ENCODE measurements at regions of chr11 and their contacts with region 1.

Region 1: GRCh38 chr11:130070846-130071200 is 1.1 kb downstream of the APLP2 start:
- DNase-seq: no peak
- H3K4me3 ChIP-seq: peak overlapping the region; percentile 91
- H3K27ac ChIP-seq: peak overlapping the region; percentile 69
- H3K4me1 ChIP-seq: peaks cover 15% of the 10 kb centered on the region
- H3K27me3 ChIP-seq: no peaks in the 10 kb centered on the region
- CTCF ChIP-seq: no peak

Region 2: GRCh38 chr11:129846501-129847335 is 224.1 kb before region 1 on chr11:
- CTCF ChIA-PET with region 1: no interaction called
- POLR2A ChIA-PET with region 1: no interaction called
- intact Hi-C with region 1: no loop called
- DNase-seq: no peak
- H3K4me3 ChIP-seq: no peak overlapping the region
- H3K27ac ChIP-seq: no peak overlapping the region
- H3K4me1 ChIP-seq: no peaks in the 10 kb centered on the region
- H3K27me3 ChIP-seq: no peaks in the 10 kb centered on the region
- CTCF ChIP-seq: no peak

Region 3: GRCh38 chr11:129996113-129996870 is 74.5 kb before region 1 on chr11:
- CTCF ChIA-PET with region 1: interaction called, 10 read pairs
- POLR2A ChIA-PET with region 1: no interaction called
- intact Hi-C with region 1: no loop called
- DNase-seq: peak; percentile 22
- H3K4me3 ChIP-seq: no peak overlapping the region
- H3K27ac ChIP-seq: peak overlapping the region; percentile 15
- H3K4me1 ChIP-seq: peaks cover 10% of the 10 kb centered on the region
- H3K27me3 ChIP-seq: no peaks in the 10 kb centered on the region
- CTCF ChIP-seq: no peak

Region 4: GRCh38 chr11:130118636-130119387 is 48.0 kb after region 1 on chr11:
- CTCF ChIA-PET with region 1: no interaction called
- POLR2A ChIA-PET with region 1: interaction called, 10 read pairs
- intact Hi-C with region 1: no loop called
- DNase-seq: no peak
- H3K4me3 ChIP-seq: no peak overlapping the region
- H3K27ac ChIP-seq: no peak overlapping the region
- H3K4me1 ChIP-seq: peaks cover 6% of the 10 kb centered on the region
- H3K27me3 ChIP-seq: no peaks in the 10 kb centered on the region
- CTCF ChIP-seq: no peak